PC-9 (cell line): ENCODE measurements at regions of chr15 and their contacts with region 1.

Region 1: DNA sequence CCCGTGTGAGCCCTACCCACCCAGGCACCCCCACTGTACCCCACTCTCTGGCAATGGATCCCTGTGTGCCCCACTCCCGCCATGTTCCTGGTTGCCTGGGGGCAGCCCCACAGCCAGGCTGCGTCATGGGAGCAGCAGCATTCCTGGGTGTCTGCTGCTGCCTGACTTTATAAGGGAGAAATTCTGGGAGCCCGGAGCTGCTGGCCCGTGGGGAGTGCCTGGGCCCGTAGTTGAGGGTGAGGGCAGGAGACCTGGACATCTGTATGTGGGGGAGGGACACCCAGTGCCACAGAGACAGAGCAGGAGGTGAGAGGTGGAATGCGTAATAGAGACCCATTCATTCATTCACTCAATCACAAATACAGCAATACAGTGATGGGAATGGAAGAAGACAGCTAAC is 15.1 kb downstream of the CSPG4 start:
- DNase-seq: no peak
- H3K4me3 ChIP-seq: no peak overlapping the region
- H3K27ac ChIP-seq: no peak overlapping the region
- H3K4me1 ChIP-seq: peaks cover 11% of the 10 kb centered on the region; the same call in 1 of the 2 replicates
- H3K27me3 ChIP-seq: no peaks in the 10 kb centered on the region
- CTCF ChIP-seq: no peak

Region 2: DNA sequence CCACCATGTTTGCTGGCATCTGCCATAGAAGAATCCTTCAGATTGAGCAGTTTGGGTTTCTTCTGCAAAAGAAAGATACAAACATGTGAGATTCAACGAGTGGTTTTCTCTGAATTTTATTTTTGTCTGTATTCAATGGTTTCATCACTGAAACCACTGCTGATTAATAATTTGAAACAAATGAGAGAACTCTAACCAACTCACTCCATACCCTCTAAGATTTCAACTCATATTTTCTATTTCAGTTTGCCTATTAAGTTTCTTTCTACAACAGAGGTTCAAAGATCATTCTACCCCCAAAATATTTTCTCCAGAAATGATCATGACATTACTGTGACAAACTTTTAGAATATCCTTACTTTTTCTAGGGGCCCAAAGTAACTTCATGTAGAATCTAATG is 290.4 kb before region 1 on chr15:
- CTCF ChIA-PET with region 1: no interaction called
- POLR2A ChIA-PET with region 1: no interaction called
- intact Hi-C with region 1: no loop called
- DNase-seq: no peak
- H3K4me3 ChIP-seq: no peak overlapping the region
- H3K27ac ChIP-seq: no peak overlapping the region
- H3K4me1 ChIP-seq: no peaks in the 10 kb centered on the region
- H3K27me3 ChIP-seq: no peaks in the 10 kb centered on the region
- CTCF ChIP-seq: no peak

Region 3: GRCh38 chr15:75631935-75632334 is 65.6 kb before region 1 on chr15:
- CTCF ChIA-PET with region 1: no interaction called
- POLR2A ChIA-PET with region 1: interaction called, 12 read pairs
- intact Hi-C with region 1: no loop called
- DNase-seq: no peak
- H3K4me3 ChIP-seq: no peak overlapping the region
- H3K27ac ChIP-seq: no peak overlapping the region
- H3K4me1 ChIP-seq: peaks cover 26% of the 10 kb centered on the region
- H3K27me3 ChIP-seq: no peaks in the 10 kb centered on the region
- CTCF ChIP-seq: no peak